ENCODE measurements at regions of chr10 and their contacts with region 1.

Region 1: GRCh38 chr10:10677479-10677878 is 340.2 kb upstream of the CELF2 start:
- DNase-seq: no peak
- H3K4me3 ChIP-seq: no peak overlapping the region
- CTCF ChIP-seq: peak; percentile 31

Region 2: DNA sequence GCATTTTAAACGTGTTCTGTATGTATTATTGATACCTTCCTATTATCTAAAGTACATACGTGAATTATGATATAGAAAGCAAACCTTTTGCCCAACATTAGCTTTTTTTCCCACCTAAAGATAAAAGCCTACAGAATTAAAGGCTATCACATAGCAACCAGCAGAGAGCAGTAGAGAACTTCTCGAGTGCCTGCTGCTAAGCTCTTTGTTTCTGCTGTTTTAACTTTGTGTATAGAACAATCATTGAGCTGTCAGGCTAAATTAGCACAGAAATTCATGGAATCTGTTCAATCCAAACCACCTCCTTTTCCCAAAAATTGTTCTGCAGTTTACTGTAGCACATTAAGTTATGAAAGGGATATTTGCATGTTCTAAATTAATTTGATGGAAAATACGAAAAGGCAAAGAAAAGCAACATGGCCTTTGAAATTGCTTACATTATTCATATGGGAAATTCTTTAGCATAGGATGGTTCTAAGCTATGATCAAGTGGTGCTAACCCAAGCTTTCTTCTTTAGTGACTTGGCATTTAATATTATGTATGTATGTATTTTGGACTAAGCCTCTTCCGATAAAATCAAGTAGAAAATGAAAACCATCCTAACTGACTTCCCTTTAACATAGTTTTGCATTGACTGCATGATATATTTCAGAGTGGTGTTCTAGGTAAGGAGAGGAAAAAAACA is 1334.5 kb before region 1 on chr10:
- CTCF ChIA-PET with region 1: interaction called, 10 read pairs
- POLR2A ChIA-PET with region 1: no interaction called
- DNase-seq: no peak
- H3K4me3 ChIP-seq: no peak overlapping the region
- CTCF ChIP-seq: peak; percentile 48

Region 3: DNA sequence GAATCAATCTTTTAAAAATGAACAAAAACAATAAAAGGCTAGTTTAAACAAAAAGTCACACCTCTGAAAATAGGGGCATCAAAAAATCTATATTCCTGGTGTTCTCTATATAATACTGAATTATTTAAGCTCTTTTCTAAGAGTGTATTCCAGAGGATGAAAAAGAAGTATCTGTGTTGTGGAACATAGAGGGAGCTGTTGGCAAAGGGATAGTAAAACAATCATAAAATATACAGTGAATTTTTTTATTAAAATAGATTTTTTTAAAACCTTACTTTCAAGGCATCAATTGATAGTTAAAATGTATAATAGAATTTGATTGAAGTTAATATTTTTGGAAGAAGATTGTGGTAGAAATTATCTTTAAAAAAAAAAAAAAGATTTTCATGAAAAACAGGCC is 1068.9 kb before region 1 on chr10:
- CTCF ChIA-PET with region 1: interaction called, 13 read pairs
- POLR2A ChIA-PET with region 1: no interaction called
- DNase-seq: no peak
- H3K4me3 ChIP-seq: no peak overlapping the region
- CTCF ChIP-seq: no peak

Region 4: GRCh38 chr10:10665750-10666149 is 11.7 kb before region 1 on chr10:
- CTCF ChIA-PET with region 1: interaction called, 12 read pairs
- POLR2A ChIA-PET with region 1: no interaction called
- DNase-seq: no peak
- H3K4me3 ChIP-seq: no peak overlapping the region
- CTCF ChIP-seq: no peak